ENCODE measurements at regions of chr17 and their contacts with region 1.

Region 1: GRCh38 chr17:82098072-82098821 is at the start of gene FASN:
- DNase-seq: peak; percentile 97
- H3K4me3 Mint-ChIP-seq: peak within 1 kb of the TSS; percentile 80
- H3K27ac Mint-ChIP-seq: peak within 1 kb of the TSS; percentile 74
- H3K4me1 Mint-ChIP-seq: peaks cover 12% of the 10 kb centered on the region
- H3K27me3 Mint-ChIP-seq: no peaks in the 10 kb centered on the region
- total RNA-seq, gene FASN: 428 and 452 TPM in 2 replicates

Region 2: GRCh38 chr17:82037113-82037888 is 60.9 kb before region 1 on chr17 and contains the start of gene DCXR:
- intact Hi-C with region 1: loop called (anchors 1 kb)
- DNase-seq: peak; percentile 99
- H3K4me3 Mint-ChIP-seq: peak within 1 kb of the TSS; percentile 83
- H3K27ac Mint-ChIP-seq: peak within 1 kb of the TSS; percentile 96
- H3K4me1 Mint-ChIP-seq: peaks cover 19% of the 10 kb centered on the region
- H3K27me3 Mint-ChIP-seq: peaks cover 2% of the 10 kb centered on the region
- total RNA-seq, gene DCXR: 128 TPM in 2 replicates

Region 3: GRCh38 chr17:82153745-82154375 is 55.6 kb after region 1 on chr17:
- intact Hi-C with region 1: loop called (anchors 1 kb)
- DNase-seq: peak; percentile 95
- H3K4me3 Mint-ChIP-seq: no peak overlapping the region
- H3K27ac Mint-ChIP-seq: no peak overlapping the region
- H3K4me1 Mint-ChIP-seq: peaks cover 5% of the 10 kb centered on the region
- H3K27me3 Mint-ChIP-seq: no peaks in the 10 kb centered on the region

Region 4: GRCh38 chr17:82164853-82165252 is 66.6 kb after region 1 on chr17:
- intact Hi-C with region 1: no loop called
- DNase-seq: no peak
- H3K4me3 Mint-ChIP-seq: no peak overlapping the region
- H3K27ac Mint-ChIP-seq: no peak overlapping the region
- H3K4me1 Mint-ChIP-seq: peaks cover 13% of the 10 kb centered on the region
- H3K27me3 Mint-ChIP-seq: no peaks in the 10 kb centered on the region

Region 5: GRCh38 chr17:82204831-82205718 is 106.8 kb after region 1 on chr17:
- intact Hi-C with region 1: loop called (anchors 5 kb)
- DNase-seq: no peak
- H3K4me3 Mint-ChIP-seq: no peak overlapping the region
- H3K27ac Mint-ChIP-seq: peak overlapping the region; percentile 89
- H3K4me1 Mint-ChIP-seq: peaks cover 45% of the 10 kb centered on the region
- H3K27me3 Mint-ChIP-seq: no peaks in the 10 kb centered on the region